Posterior vena cava (tissue), 2 donors: ENCODE measurements at regions of chr2 and their contacts with region 1.

Region 1: GRCh38 chr2:238240752-238241711 is 1.2 kb upstream of the HES6 start:
- DNase-seq: peak; percentile 82

Region 2: DNA sequence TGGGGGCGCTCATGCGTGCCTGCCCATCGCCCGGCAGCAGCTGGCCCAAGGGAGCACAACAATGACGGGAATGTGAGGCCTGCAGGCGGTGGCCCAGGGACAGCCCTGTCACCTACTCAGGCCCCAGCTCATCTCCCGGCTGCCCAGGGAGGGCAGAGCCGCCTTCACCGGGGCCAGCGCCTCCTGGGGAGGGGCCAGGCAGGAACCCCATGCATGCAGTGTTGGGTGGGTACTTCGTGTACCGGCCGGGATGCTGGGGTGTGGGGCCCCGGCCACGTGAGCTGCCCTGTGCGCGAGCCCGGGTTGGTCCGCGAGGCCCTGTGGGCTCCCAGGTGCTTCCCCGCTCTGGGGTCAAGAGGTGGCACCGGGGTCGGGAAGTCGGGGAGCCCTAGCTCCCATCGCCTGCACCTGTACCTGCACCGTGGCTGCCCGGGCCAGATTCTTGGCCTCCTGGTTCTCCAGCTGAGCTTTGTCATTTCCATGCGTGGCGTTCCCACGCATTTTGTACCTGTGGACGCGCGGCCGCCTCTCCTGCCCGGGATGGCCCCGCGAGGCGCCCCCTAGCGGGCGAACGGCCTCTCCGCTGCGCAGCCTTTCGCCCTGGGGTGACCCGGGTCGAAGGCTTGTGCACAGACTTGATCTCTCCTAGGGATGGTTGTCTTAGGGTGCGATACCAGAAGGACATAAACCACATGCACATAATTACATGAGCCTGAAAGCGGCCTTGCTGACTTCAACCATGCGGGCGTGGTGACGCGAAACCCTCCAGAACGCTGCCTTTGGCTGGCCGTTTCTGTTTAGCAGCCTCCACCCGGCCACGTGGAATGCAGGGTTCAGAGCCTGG is 101.6 kb before region 1 on chr2:
- intact Hi-C with region 1: no loop called
- DNase-seq: no peak

Region 3: GRCh38 chr2:238285653-238286089 is 44.6 kb after region 1 on chr2:
- intact Hi-C with region 1: loop called in 1 of 2 experiments (anchors 1 kb)
- DNase-seq: peak; percentile 93